PC-3 (cell line): ENCODE measurements at regions of chr5 and their contacts with region 1.

Region 1: GRCh38 chr5:130652176-130652575 is 512.9 kb downstream of the HINT1 start:
- DNase-seq: peak; percentile 94
- ATAC-seq: peak; percentile 97
- H3K4me3 ChIP-seq: no peak overlapping the region
- H3K27ac ChIP-seq: peak overlapping the region; percentile 79
- H3K4me1 ChIP-seq: peaks cover 20% of the 10 kb centered on the region
- H3K27me3 ChIP-seq: no peaks in the 10 kb centered on the region
- CTCF ChIP-seq: no peak

Region 2: DNA sequence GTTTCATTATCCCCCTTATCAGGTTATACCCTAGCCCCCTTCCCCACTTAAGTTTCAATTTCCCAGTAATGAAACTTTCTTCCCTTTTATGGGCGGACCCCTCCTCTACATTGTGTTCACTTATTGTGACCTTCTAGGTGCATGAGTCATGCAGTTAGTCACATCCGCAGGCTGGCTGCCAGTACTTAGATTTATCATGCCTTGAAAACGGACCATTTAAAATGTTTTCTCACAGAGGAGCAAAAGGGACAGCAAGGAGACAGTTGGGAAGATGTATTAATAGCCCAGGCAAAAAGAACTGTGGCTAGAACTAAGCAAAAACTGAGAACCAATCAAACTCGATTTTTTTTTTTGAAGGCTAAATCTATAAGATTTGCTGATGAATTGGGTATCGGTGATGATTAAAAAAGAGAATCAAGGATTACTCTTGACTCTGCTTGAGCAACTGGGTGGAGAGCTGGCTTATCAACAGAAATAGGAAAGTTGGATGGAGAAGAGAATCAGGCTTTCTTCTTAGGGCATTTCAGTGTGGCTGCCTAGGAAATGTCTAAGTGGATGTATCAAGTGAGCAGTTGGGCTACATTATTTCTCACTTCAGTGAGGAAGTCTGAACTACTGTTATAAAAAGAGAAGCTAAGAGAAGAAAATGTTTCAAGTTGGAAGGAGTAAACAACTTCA is 102.2 kb before region 1 on chr5:
- CTCF ChIA-PET with region 1: no interaction called
- POLR2A ChIA-PET with region 1: no interaction called
- intact Hi-C with region 1: loop called (anchors 10 kb)
- DNase-seq: peak; percentile 97
- ATAC-seq: peak; percentile 73
- H3K4me3 ChIP-seq: peak overlapping the region; percentile 24; the same call in 1 of the 2 replicates
- H3K27ac ChIP-seq: peak overlapping the region; percentile 96
- H3K4me1 ChIP-seq: peaks cover 41% of the 10 kb centered on the region
- H3K27me3 ChIP-seq: no peaks in the 10 kb centered on the region
- CTCF ChIP-seq: no peak

Region 3: GRCh38 chr5:130710596-130710995 is 58.4 kb after region 1 on chr5:
- CTCF ChIA-PET with region 1: no interaction called
- POLR2A ChIA-PET with region 1: interaction called, 5 read pairs
- intact Hi-C with region 1: loop called (anchors 5 kb)
- DNase-seq: peak; percentile 87
- ATAC-seq: peak; percentile 77
- H3K4me3 ChIP-seq: no peak overlapping the region
- H3K27ac ChIP-seq: peak overlapping the region; percentile 99
- H3K4me1 ChIP-seq: peaks cover 61% of the 10 kb centered on the region
- H3K27me3 ChIP-seq: no peaks in the 10 kb centered on the region
- CTCF ChIP-seq: no peak

Region 4: GRCh38 chr5:130795037-130795436 is 142.9 kb after region 1 on chr5:
- CTCF ChIA-PET with region 1: no interaction called
- POLR2A ChIA-PET with region 1: no interaction called
- intact Hi-C with region 1: no loop called
- DNase-seq: peak; percentile 42
- ATAC-seq: peak; percentile 28; the same call in 1 of the 2 replicates
- H3K4me3 ChIP-seq: no peak overlapping the region
- H3K27ac ChIP-seq: peak overlapping the region; percentile 41
- H3K4me1 ChIP-seq: peaks cover 17% of the 10 kb centered on the region
- H3K27me3 ChIP-seq: no peaks in the 10 kb centered on the region
- CTCF ChIP-seq: no peak